Activated CD4-positive, alpha-beta memory T cell treated with anti-CD3 and anti-CD28 coated beads, Interleukin-2, amount 10 ng/mL, durations not matched to agents 7 days and 5 days (primary cell): ENCODE measurements at regions of chr5 and their contacts with region 1.

Region 1: GRCh38 chr5:131548176-131548575 is 86.9 kb downstream of the RAPGEF6 start:
- DNase-seq: no peak
- H3K4me3 Mint-ChIP-seq: peak overlapping the region; percentile 89
- H3K27ac Mint-ChIP-seq: peak overlapping the region; percentile 90
- H3K4me1 Mint-ChIP-seq: peaks cover 53% of the 10 kb centered on the region
- H3K27me3 Mint-ChIP-seq: no peaks in the 10 kb centered on the region

Region 2: DNA sequence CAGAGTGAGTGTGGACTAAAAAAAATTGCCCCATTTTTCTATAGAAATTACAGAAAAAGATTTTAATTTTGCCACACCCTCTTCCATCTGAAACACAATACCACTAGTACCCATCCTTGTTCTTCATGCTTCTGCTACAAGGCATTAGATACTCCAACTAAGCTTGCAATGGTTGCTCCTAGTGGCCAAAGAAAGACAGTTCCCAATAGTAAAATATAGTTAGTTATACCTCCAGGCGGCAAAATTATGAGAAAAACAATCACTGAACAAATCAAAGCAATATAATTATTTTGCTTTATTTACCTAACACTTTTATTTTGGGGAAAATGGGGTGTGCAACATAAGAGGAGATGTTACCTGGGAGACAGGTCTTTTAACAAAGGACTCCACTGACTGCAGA is 14.3 kb before region 1 on chr5:
- CTCF ChIA-PET with region 1: interaction called, 13 read pairs
- POLR2A ChIA-PET with region 1: interaction called, 62 read pairs
- DNase-seq: no peak
- H3K4me3 Mint-ChIP-seq: no peak overlapping the region
- H3K27ac Mint-ChIP-seq: peak overlapping the region; percentile 4
- H3K4me1 Mint-ChIP-seq: peaks cover 75% of the 10 kb centered on the region
- H3K27me3 Mint-ChIP-seq: no peaks in the 10 kb centered on the region